ENCODE measurements at regions of chr12 and their contacts with region 1.

Region 1: GRCh38 chr12:55738123-55739024 is 4.5 kb upstream of the GDF11 start:
- DNase-seq: peak; percentile 79 to 87 (median 83)
- H3K4me3 ChIP-seq: peak overlapping the region; percentile 39 to 75
- H3K4me3 Mint-ChIP-seq: peak overlapping the region; percentile 87 to 95 (median 90)
- H3K27ac ChIP-seq: peak overlapping the region; percentile 76
- H3K27ac Mint-ChIP-seq: peak overlapping the region; percentile 82 to 97 (median 96)
- H3K4me1 ChIP-seq: peaks cover 19% of the 10 kb centered on the region
- H3K4me1 Mint-ChIP-seq: peaks cover 21 to 38% (median 26%) of the 10 kb centered on the region in 4 donors
- H3K27me3 ChIP-seq: no peaks in the 10 kb centered on the region
- H3K27me3 Mint-ChIP-seq: no peaks in the 10 kb centered on the region

Region 2: GRCh38 chr12:55619354-55620138 is 118.8 kb before region 1 on chr12:
- CTCF ChIA-PET with region 1: no interaction called
- POLR2A ChIA-PET with region 1: no interaction called
- intact Hi-C with region 1: no loop called
- DNase-seq: peak; percentile 56 to 70 (median 67)
- H3K4me3 ChIP-seq: no peak overlapping the region
- H3K4me3 Mint-ChIP-seq: peak overlapping the region in 1 of 8 donors; percentile 38
- H3K27ac ChIP-seq: no peak overlapping the region
- H3K27ac Mint-ChIP-seq: no peak overlapping the region
- H3K4me1 ChIP-seq: no peaks in the 10 kb centered on the region
- H3K4me1 Mint-ChIP-seq: peaks cover 0 to 5% (median 2%) of the 10 kb centered on the region in 4 donors
- H3K27me3 ChIP-seq: no peaks in the 10 kb centered on the region
- H3K27me3 Mint-ChIP-seq: peaks cover 24 to 25% of the 10 kb centered on the region in 2 donors

Region 3: DNA sequence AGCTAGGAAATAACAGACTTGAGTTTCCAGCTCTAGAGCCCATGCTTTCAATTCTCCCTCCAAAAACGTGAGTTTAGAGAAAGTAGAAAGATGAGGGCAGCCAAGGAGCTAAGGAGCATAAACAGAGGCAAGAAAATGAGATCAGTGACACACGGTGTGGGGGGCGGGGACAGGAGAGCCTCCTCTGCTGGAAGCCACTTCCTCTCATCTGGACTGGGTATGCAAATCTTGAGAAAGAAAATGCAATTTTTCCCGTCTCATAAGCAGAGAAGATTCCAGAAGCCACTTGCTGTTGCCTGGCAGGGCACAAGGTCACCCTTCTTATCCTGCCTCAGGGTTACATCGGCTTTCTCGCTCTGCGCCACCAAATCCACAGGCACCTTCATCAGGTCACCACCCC is 95.7 kb before region 1 on chr12:
- CTCF ChIA-PET with region 1: interaction called, 9 read pairs
- POLR2A ChIA-PET with region 1: interaction called, 4 read pairs
- intact Hi-C with region 1: loop called (anchors 5 kb)
- DNase-seq: no peak
- H3K4me3 ChIP-seq: no peak overlapping the region
- H3K4me3 Mint-ChIP-seq: peak overlapping the region in 1 of 8 donors; percentile 37
- H3K27ac ChIP-seq: no peak overlapping the region
- H3K27ac Mint-ChIP-seq: peak overlapping the region in 3 of 7 donors; percentile 50 to 83 (median 57)
- H3K4me1 ChIP-seq: peaks cover 21% of the 10 kb centered on the region
- H3K4me1 Mint-ChIP-seq: peaks cover 14 to 31% (median 22%) of the 10 kb centered on the region in 4 donors
- H3K27me3 ChIP-seq: no peaks in the 10 kb centered on the region
- H3K27me3 Mint-ChIP-seq: peaks cover 0 to 4% of the 10 kb centered on the region in 2 donors

Region 4: GRCh38 chr12:55757701-55758100 is 19.3 kb after region 1 on chr12:
- CTCF ChIA-PET with region 1: interaction called, 37 read pairs
- POLR2A ChIA-PET with region 1: interaction called, 18 read pairs
- intact Hi-C with region 1: no loop called
- DNase-seq: no peak
- H3K4me3 ChIP-seq: no peak overlapping the region
- H3K4me3 Mint-ChIP-seq: no peak overlapping the region
- H3K27ac ChIP-seq: no peak overlapping the region
- H3K27ac Mint-ChIP-seq: peak overlapping the region; percentile 5 to 77 (median 47)
- H3K4me1 ChIP-seq: no peaks in the 10 kb centered on the region
- H3K4me1 Mint-ChIP-seq: peaks cover 0 to 5% (median 2%) of the 10 kb centered on the region in 4 donors
- H3K27me3 ChIP-seq: no peaks in the 10 kb centered on the region
- H3K27me3 Mint-ChIP-seq: no peaks in the 10 kb centered on the region

Region 5: GRCh38 chr12:55926738-55927587 is 188.6 kb after region 1 on chr12:
- CTCF ChIA-PET with region 1: interaction called, 25 read pairs
- POLR2A ChIA-PET with region 1: interaction called, 201 read pairs
- intact Hi-C with region 1: loop called (anchors 2 kb)
- DNase-seq: peak; percentile 83 to 91 (median 85)
- H3K4me3 ChIP-seq: peak overlapping the region; percentile 95 to 100
- H3K4me3 Mint-ChIP-seq: peak overlapping the region; percentile 97 to 100 (median 99)
- H3K27ac ChIP-seq: peak overlapping the region; percentile 88
- H3K27ac Mint-ChIP-seq: peak overlapping the region; percentile 92 to 99 (median 96)
- H3K4me1 ChIP-seq: peaks cover 51% of the 10 kb centered on the region
- H3K4me1 Mint-ChIP-seq: peaks cover 36 to 79% (median 46%) of the 10 kb centered on the region in 4 donors
- H3K27me3 ChIP-seq: no peaks in the 10 kb centered on the region
- H3K27me3 Mint-ChIP-seq: no peaks in the 10 kb centered on the region

Region 6: DNA sequence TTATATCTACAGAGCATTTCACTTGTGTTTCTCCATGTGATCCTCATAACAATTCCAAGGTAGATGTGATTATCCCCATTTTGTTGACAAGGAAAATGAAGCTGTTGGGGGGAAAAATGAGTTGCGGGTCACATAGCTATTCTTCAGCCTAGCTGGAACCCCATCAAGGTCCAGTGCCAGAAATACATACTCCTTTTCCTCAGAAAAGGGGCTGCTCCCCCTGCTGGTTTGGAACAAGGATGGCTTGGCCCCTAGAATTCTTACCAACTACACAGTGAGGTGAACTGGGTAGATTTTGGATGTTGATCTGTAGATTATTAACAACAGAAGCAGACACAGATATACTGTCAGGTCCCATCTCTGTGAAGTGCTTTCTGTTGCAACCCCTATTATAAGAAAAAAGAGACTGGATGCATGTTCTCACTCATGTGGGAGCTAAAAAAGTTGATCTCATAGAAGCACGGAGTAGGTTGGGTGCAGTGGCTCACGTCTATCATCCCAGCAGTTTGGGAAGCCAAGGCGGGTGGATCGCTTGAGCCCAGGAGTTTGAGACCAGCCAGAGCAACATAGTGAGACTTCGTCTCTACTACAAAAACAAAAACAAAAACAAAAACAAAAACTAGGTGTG is 291.4 kb after region 1 on chr12:
- CTCF ChIA-PET with region 1: interaction called, 30 read pairs
- POLR2A ChIA-PET with region 1: interaction called, 5 read pairs
- intact Hi-C with region 1: loop called (anchors 1 kb)
- DNase-seq: peak in 4 of 5 donors; percentile 43 to 49 (median 46)
- H3K4me3 ChIP-seq: no peak overlapping the region
- H3K4me3 Mint-ChIP-seq: no peak overlapping the region
- H3K27ac ChIP-seq: no peak overlapping the region
- H3K27ac Mint-ChIP-seq: peak overlapping the region in 3 of 7 donors; percentile 3 to 68 (median 13)
- H3K4me1 ChIP-seq: peaks cover 7% of the 10 kb centered on the region
- H3K4me1 Mint-ChIP-seq: peaks cover 5 to 20% (median 7%) of the 10 kb centered on the region in 4 donors
- H3K27me3 ChIP-seq: no peaks in the 10 kb centered on the region
- H3K27me3 Mint-ChIP-seq: no peaks in the 10 kb centered on the region

Region 7: GRCh38 chr12:56224102-56224701 is 485.8 kb after region 1 on chr12 and contains the start of gene NABP2:
- CTCF ChIA-PET with region 1: interaction called, 6 read pairs
- POLR2A ChIA-PET with region 1: interaction called, 10 read pairs
- intact Hi-C with region 1: loop called (anchors 1 kb)
- DNase-seq: peak; percentile 88 to 93 (median 89)
- H3K4me3 ChIP-seq: peak within 1 kb of the TSS; percentile 28 to 79
- H3K4me3 Mint-ChIP-seq: peak within 1 kb of the TSS; percentile 83 to 99 (median 87)
- H3K27ac ChIP-seq: peak within 1 kb of the TSS; percentile 83
- H3K27ac Mint-ChIP-seq: peak within 1 kb of the TSS; percentile 90 to 100 (median 99)
- H3K4me1 ChIP-seq: peaks cover 42% of the 10 kb centered on the region
- H3K4me1 Mint-ChIP-seq: peaks cover 24 to 58% (median 43%) of the 10 kb centered on the region in 4 donors
- H3K27me3 ChIP-seq: no peaks in the 10 kb centered on the region
- H3K27me3 Mint-ChIP-seq: no peaks in the 10 kb centered on the region
- total RNA-seq, gene NABP2: 16.9 to 19.1 TPM